Left colon (tissue), 2 donors: ENCODE measurements at regions of chr5 and their contacts with region 1.

Region 1: GRCh38 chr5:59380350-59380951 is 513.1 kb downstream of the PDE4D start:
- DNase-seq: no peak
- ATAC-seq: peak; percentile 80

Region 2: GRCh38 chr5:59193616-59194319 is 186.7 kb before region 1 on chr5:
- intact Hi-C with region 1: loop called (anchors 5 to 10 kb)
- DNase-seq: no peak
- ATAC-seq: no peak